HEK293T (cell line): ENCODE measurements at regions of chr2 and their contacts with region 1.

Region 1: DNA sequence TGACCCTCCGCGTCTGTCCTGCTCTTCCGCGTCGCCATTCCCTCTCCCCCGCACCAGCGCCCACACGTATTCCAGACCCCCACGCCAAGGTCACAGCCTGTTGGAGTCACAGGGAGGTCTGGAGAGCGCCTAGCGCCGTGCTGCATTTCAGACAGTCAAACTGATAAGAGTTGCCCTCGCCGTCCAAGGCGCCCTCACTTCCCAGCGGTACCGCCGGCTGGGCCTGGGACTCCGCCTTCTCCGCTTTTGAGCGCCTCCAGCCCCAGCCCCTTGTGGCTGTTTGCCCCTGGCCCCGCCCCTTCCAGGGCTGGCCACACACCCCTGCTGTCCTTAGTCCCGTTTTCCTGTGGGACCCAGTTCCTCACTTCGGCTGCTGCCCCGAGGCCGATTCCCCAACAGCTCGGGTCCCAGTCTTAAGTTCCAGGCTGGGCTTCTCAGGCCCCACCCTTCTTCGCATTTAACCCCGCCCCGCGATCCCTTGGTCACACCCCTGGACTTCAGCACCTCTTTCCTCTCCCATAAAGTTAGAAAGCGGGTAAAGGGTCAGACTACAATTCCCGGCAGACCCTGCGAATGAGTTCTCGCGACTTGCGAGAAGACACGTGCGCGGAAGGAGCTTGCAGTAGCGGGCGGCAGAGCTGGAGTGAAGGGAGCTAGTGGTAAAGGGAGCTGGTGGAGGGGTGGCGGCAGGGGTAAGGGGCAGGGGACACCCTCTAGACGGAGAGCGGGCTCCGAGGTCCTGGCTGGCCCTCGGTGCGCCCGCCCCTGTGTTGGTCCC is at the start of gene GMPPA:
- DNase-seq: peak; percentile 94

Region 2: DNA sequence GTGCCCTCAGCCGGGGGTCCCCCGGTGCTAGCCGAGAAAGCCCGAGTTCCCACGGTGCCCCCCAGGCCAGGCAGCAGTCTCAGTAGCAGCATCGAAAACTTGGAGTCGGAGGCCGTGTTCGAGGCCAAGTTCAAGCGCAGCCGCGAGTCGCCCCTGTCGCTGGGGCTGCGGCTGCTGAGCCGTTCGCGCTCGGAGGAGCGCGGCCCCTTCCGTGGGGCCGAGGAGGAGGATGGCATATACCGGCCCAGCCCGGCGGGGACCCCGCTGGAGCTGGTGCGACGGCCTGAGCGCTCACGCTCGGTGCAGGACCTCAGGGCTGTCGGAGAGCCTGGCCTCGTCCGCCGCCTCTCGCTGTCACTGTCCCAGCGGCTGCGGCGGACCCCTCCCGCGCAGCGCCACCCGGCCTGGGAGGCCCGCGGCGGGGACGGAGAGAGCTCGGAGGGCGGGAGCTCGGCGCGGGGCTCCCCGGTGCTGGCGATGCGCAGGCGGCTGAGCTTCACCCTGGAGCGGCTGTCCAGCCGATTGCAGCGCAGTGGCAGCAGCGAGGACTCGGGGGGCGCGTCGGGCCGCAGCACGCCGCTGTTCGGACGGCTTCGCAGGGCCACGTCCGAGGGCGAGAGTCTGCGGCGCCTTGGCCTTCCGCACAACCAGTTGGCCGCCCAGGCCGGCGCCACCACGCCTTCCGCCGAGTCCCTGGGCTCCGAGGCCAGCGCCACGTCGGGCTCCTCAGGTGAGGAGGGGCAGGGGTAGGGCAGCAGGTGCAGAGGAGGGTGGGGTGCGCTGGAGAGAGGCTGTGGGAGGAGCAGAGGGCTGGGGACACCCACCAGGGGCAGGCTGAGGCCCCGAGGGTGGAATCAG is 13.9 kb before region 1 on chr2:
- CTCF ChIA-PET with region 1: interaction called, 32 read pairs
- POLR2A ChIA-PET with region 1: interaction called, 5 read pairs
- DNase-seq: no peak

Region 3: GRCh38 chr2:219509780-219510511 is 11.5 kb after region 1 on chr2:
- CTCF ChIA-PET with region 1: interaction called, 31 read pairs
- POLR2A ChIA-PET with region 1: interaction called, 41 read pairs
- DNase-seq: peak; percentile 70

Region 4: DNA sequence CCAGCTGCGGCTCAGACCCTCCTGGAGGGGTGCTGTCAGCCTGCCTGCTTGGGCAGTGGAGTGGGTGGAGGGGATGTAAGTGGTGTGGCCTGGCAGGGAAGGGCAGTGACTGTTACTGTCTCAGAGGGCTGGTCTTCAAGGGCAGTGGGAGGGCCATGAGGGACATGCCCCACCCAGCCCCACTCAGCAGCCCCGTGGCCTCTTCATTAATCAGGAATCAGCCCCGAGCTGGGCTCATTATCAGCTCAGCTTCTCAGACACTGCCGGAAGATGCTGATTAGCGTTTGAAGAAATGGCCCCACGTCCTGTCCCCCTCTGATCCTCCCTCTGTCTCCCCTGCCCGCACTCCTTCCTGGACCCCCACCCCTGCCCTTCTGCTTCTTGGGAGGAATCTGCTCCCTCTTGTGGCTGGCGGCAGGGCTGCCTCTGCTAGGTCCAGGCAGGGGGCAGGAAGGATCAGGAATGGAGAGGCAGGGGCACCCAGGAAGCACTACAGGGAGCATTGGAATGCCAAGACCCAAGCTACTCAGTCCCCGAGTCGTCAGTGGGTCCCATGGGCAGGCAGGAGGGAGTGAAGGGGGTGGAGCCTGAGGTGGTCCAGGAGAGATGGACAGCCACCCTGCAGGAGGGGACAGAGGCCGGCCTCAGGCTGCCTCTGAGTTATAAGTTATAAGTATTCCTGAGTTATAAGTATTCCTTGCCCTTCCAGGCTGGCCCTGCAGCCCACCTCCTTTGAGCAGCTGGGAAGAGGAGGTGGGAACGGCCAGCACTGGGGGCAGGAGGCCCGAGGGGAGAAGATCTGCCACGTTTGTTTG is 22.8 kb after region 1 on chr2:
- CTCF ChIA-PET with region 1: interaction called, 21 read pairs
- POLR2A ChIA-PET with region 1: interaction called, 6 read pairs
- DNase-seq: peak; percentile 79

Region 5: DNA sequence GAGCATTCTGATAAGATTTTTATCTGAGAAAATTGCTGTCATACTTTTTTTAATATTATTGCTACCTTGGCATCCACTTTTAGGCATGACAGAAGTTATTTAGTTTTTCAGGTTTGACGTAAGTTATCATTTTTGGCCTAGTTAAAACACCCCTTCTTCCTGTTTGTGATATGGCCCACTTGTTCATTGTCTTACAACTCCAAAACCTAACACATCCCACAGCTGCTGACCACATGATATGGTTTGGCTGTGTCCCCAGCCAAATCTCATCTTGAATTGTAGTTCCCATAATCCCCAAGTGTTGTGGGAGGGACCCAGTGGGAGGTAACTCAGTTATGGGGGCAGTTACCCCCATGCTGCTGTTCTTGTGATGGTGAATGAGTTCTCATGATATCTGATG is 517.1 kb after region 1 on chr2:
- CTCF ChIA-PET with region 1: no interaction called
- POLR2A ChIA-PET with region 1: no interaction called
- DNase-seq: no peak